Mammary epithelial cell (primary cell): ENCODE measurements at regions of chr4 and their contacts with region 1.

Region 1: GRCh38 chr4:98260579-98261290 is 449 bp upstream of the RAP1GDS1 start:
- DNase-seq: peak; percentile 94
- H3K4me3 ChIP-seq: peak overlapping the region; percentile 67 to 78 (median 72)
- H3K27ac ChIP-seq: peak overlapping the region; percentile 84
- H3K4me1 ChIP-seq: peaks cover 13% of the 10 kb centered on the region
- H3K27me3 ChIP-seq: no peaks in the 10 kb centered on the region
- CTCF ChIP-seq: no peak

Region 2: DNA sequence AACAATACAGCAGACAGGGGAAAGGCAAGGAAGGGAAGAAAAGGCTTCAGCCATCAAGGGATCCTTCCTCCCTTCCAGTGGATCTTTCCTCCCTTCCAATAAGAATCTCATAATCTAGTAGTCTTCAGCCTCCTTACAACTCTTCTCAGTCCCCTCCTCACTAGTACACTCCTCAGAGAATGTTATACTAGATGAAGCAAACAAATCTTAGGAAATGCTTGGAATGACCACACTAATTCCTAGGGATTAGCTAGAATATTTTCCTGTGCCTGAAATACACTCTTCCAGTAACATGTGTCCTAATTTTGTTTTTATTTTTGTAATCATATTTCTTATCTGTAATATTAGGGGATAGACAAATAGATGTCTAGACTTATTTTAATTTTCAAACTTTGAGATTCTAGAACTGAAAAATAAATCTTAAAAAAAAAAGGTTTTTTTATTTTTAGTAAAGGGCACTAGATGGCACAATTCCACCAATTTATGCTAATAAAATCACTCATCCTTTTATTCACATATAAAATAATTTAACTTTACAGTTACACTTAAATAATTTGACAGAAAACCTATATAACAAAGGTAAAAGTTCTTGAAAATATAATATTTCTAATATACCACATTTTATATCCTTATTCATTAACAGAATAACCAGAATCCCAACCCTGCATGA is 110.5 kb before region 1 on chr4:
- CTCF ChIA-PET with region 1: no interaction called
- dilution Hi-C with region 1: no loop called
- in situ Hi-C with region 1: loop called in 1 of 2 experiments (anchors 25 kb)
- intact Hi-C with region 1: no loop called
- DNase-seq: no peak
- H3K4me3 ChIP-seq: no peak overlapping the region
- H3K27ac ChIP-seq: no peak overlapping the region
- H3K4me1 ChIP-seq: no peaks in the 10 kb centered on the region
- H3K27me3 ChIP-seq: no peaks in the 10 kb centered on the region
- CTCF ChIP-seq: peak in 1 of 2 donors; percentile 14

Region 3: DNA sequence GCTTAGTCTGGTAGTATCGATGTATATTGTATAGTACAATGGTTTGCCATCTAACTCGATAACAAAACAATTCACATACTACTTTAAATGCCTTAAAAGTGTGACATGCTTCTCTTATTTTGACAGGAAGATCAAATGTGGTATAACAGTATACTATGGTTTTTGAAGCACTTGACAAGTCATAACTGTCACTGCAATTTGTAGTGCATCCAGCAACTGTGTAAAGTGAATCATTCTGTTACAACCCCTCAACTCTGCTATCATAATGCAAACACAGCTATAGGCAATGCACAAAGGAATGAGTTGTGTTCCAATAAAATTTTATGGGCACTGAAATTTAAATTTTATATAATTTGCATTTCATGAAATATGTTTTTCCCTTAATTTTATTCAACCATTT is 14.4 kb after region 1 on chr4:
- CTCF ChIA-PET with region 1: no interaction called
- dilution Hi-C with region 1: no loop called
- in situ Hi-C with region 1: no loop called
- intact Hi-C with region 1: no loop called
- DNase-seq: no peak
- H3K4me3 ChIP-seq: no peak overlapping the region
- H3K27ac ChIP-seq: no peak overlapping the region
- H3K4me1 ChIP-seq: no peaks in the 10 kb centered on the region
- H3K27me3 ChIP-seq: no peaks in the 10 kb centered on the region
- CTCF ChIP-seq: no peak

Region 4: GRCh38 chr4:98377559-98377958 is 116.8 kb after region 1 on chr4:
- CTCF ChIA-PET with region 1: no interaction called
- dilution Hi-C with region 1: no loop called
- in situ Hi-C with region 1: no loop called
- intact Hi-C with region 1: loop called (anchors 10 kb)
- DNase-seq: no peak
- H3K4me3 ChIP-seq: no peak overlapping the region
- H3K27ac ChIP-seq: no peak overlapping the region
- H3K4me1 ChIP-seq: no peaks in the 10 kb centered on the region
- H3K27me3 ChIP-seq: no peaks in the 10 kb centered on the region
- CTCF ChIP-seq: no peak

Region 5: GRCh38 chr4:98446499-98447375 is 186.0 kb after region 1 on chr4:
- CTCF ChIA-PET with region 1: no interaction called
- dilution Hi-C with region 1: no loop called
- in situ Hi-C with region 1: no loop called
- intact Hi-C with region 1: loop called (anchors 5 kb)
- DNase-seq: peak; percentile 94
- H3K4me3 ChIP-seq: no peak overlapping the region
- H3K27ac ChIP-seq: peak overlapping the region; percentile 92
- H3K4me1 ChIP-seq: peaks cover 38% of the 10 kb centered on the region
- H3K27me3 ChIP-seq: no peaks in the 10 kb centered on the region
- CTCF ChIP-seq: no peak